ENCODE measurements at regions of chr10 and their contacts with region 1.

Region 1: GRCh38 chr10:47047671-47048525 is 136.7 kb downstream of the PTPN20 start:
- DNase-seq: peak; percentile 68 to 96
- H3K4me3 ChIP-seq: no peak overlapping the region
- CTCF ChIP-seq: no peak
- POLR2A ChIP-seq: no peak

Region 2: DNA sequence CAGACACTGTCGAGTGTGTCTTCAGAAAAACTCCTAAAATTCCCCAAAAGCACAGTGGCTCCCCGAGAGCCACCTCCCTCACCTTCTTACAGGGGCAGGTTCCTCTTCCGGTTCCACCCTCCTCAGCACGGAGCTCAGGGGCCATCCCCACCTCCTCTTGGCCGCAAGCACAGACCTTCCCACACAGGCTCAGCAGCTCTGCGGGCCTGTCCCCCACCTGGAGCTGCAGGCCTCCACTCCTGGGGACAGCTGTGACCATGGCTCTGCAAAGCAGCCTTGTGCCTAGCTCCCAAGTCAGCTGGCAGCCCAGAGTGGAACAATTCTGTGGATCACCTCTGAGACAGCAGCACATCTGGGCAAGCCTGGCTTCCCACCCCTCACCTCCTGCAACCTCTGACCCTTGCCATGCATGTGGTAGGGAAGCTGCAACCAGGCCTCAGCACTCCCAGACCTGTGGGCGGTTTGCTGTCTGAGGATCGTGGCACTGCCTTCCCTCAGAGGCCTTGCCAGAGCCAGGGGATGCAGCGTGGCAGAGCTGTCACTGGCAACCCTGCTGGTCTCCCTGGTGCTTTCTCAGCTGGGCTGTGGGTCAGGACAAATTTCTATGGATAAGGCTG is 1594.2 kb before region 1 on chr10:
- intact Hi-C with region 1: no loop called
- DNase-seq: no peak
- H3K4me3 ChIP-seq: no peak overlapping the region
- CTCF ChIP-seq: no peak
- POLR2A ChIP-seq: no peak

Region 3: DNA sequence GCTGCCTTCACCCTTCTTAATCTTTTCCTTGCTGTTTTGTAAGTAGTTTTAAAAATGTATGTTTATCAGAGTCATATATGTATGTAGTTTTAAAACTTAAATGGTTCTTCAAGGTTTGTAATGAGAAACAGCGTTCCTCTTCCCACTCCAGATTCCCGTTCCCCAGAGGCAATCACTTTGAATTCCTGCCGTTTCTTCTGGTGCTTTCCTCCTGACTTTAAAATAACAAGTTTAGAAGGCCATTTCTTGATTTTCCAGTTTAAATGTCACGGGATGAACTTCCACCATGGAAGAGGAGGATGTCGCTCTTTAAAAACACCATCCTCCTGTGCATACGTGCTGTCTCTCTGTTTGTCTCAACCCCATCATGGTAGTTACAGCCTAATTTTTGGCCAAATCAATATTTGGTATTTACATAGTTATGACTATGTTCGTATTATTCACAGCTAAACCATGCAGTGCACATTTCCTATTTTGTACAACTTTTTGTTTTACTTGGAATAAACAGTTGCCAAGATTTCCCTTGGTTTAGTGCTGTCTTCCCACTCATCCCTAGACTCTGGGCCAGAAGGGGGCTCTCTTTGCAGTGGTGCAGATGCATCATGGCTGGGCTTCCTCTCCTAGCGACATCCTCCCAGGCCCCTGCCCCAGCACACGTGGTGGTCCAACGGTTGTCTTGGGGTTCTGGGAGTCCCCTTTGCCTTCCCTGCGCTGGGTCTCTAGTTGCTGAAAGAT is 14.7 kb after region 1 on chr10:
- intact Hi-C with region 1: no loop called
- DNase-seq: peak in 1 of 2 donors; percentile 46
- H3K4me3 ChIP-seq: no peak overlapping the region
- CTCF ChIP-seq: no peak
- POLR2A ChIP-seq: no peak

Region 4: DNA sequence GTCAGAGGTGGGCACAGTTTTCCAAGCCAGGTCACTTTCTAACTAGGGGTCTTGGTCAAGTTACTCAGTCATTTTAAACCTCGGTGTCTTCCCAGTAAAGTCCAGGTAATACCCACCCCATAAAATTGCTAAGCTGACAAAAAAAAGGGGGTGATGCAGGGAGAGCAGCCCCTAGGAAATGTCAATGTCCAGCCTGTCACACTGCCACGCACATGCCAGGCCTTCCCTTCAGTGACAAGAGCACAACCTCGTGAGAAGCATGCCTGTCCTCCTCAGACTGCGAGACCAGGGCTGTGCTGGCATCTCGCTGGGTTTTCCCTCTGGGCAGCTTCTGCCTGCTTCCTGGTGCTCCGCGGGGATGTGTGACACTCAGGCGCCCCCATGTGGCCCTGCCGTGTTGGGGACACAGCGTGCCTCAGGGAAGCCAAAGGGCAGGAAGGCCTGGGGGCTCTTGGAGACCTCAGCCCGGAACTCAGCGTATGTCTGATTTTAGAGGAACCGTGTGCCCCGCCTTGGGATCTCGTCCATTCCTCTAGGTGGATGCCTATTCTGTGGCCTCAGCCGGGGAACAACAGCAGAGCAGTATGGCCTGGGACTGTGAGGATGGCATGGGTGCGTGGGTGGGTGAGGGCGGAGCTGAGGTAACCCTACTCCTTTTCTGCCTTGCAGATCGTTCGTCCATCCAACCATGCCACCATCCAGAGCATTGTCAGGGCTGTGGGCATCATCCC is 264.2 kb after region 1 on chr10:
- intact Hi-C with region 1: loop called (anchors 10 kb)
- DNase-seq: peak; percentile 76 to 95
- H3K4me3 ChIP-seq: no peak overlapping the region
- CTCF ChIP-seq: peak in 1 of 3 donors; percentile 44
- POLR2A ChIP-seq: no peak